Calu3 (cell line): ENCODE measurements at regions of chr10 and their contacts with region 1.

Region 1: DNA sequence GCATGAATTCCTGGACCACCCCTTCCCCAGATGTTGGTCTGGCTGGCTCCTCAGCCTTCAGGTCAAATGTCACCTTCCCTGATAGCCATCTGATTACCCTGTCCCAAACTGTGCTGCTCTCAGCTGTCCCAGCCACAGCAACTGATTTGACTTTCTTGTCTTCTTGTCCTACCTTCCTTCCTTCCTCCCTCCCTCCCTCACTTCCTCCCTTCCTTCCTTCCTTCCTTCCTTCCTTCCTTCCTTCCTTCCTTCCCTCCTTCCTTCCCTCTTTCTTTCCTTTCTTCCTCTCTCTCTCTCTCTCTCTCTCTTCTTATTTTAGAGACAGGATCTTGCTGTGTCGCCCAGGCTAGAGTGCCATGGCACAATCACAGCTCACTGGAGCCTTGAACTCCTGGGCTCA is 242.5 kb downstream of the RPS24 start:
- DNase-seq: no peak
- H3K4me3 Mint-ChIP-seq: no peak overlapping the region
- H3K27ac Mint-ChIP-seq: no peak overlapping the region
- H3K4me1 Mint-ChIP-seq: no peaks in the 10 kb centered on the region
- H3K27me3 Mint-ChIP-seq: peaks cover 88% of the 10 kb centered on the region
- CTCF ChIP-seq: no peak

Region 2: DNA sequence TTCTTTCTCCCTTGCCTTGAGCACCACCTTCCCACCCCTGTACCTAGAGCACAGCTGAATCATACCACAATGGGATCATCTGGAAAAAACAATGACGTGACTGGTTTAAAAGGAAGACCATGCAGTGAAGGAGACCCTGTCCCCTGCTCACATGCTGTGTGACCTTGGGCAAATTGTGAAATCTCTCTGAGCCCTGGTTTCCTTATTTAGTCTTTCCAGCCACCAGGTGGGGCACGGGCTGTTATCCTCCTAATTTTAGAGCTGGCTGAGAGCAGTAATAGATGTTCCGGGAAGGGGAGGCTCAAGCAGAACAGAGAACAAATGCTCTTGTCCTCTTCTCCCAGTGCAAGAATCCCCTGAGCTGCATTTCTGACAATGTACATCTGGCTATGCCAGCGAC is 44.2 kb before region 1 on chr10:
- CTCF ChIA-PET with region 1: no interaction called
- intact Hi-C with region 1: no loop called
- DNase-seq: peak; percentile 18
- H3K4me3 Mint-ChIP-seq: no peak overlapping the region
- H3K27ac Mint-ChIP-seq: no peak overlapping the region
- H3K4me1 Mint-ChIP-seq: no peaks in the 10 kb centered on the region
- H3K27me3 Mint-ChIP-seq: peaks cover 98% of the 10 kb centered on the region
- CTCF ChIP-seq: peak; percentile 12

Region 3: GRCh38 chr10:78470267-78471103 is 194.3 kb after region 1 on chr10:
- CTCF ChIA-PET with region 1: interaction called, 13 read pairs
- intact Hi-C with region 1: no loop called
- DNase-seq: no peak
- H3K4me3 Mint-ChIP-seq: no peak overlapping the region
- H3K27ac Mint-ChIP-seq: no peak overlapping the region
- H3K4me1 Mint-ChIP-seq: no peaks in the 10 kb centered on the region
- H3K27me3 Mint-ChIP-seq: peaks cover 75% of the 10 kb centered on the region
- CTCF ChIP-seq: no peak